SK-N-SH (cell line): ENCODE measurements at regions of chr19 and their contacts with region 1.

Region 1: GRCh38 chr19:44570984-44571684 is 41.7 kb upstream of the CEACAM20 start:
- DNase-seq: peak; percentile 61
- H3K4me3 ChIP-seq: peak overlapping the region in 1 of 2 experiments; percentile 34; a peak in 1 of 4 replicates
- H3K27ac ChIP-seq: no peak overlapping the region
- H3K4me1 ChIP-seq: no peaks in the 10 kb centered on the region
- H3K27me3 ChIP-seq: peaks cover 32% of the 10 kb centered on the region; the same call in 1 of the 2 replicates
- CTCF ChIP-seq: peak; percentile 88
- EP300 ChIP-seq: no peak
- RAD21 ChIP-seq: peak; percentile 81

Region 2: DNA sequence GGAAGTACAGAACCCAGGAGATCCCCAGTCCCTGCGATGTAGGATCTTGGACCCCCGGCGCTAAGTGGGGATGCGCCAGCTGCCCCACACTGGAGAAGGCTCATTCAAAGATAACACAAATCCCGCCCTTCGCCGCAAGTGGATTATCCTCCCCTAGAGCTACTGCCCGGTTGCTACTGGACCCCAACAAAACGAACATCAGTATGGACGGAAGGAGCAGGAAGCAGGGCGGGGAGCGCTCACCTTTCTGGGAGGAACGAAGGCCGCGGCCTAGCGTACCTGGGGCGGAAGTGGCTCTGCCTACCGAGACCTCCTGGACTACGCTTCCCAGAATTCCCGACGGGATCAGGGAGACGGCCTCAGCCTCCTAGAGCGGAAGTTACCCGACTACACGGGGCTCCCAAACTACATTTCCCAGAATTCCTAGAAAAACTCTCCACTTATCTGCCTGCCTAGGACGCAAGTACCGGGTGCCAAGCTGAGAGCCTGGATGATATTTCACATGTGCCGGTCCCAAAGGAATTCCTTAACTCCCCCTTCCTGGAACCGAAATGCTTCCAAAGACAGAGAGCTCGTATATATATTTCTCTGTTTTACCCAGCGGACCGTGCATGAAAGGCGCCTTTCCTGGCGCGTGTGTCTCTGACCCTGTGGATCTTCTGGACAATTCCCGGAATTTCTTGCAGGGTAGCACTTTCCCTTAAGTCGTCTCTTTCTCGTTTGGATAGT is 214.6 kb before region 1 on chr19 and contains the start of gene ZNF112:
- CTCF ChIA-PET with region 1: no interaction called
- POLR2A ChIA-PET with region 1: no interaction called
- DNase-seq: peak; percentile 67
- H3K4me3 ChIP-seq: peak within 1 kb of the TSS; percentile 82 to 90
- H3K27ac ChIP-seq: peak within 1 kb of the TSS; percentile 16 to 78; a peak in 1 of 4 replicates
- H3K4me1 ChIP-seq: no peaks in the 10 kb centered on the region; a peak in 1 of 4 replicates
- H3K27me3 ChIP-seq: no peaks in the 10 kb centered on the region
- CTCF ChIP-seq: no peak
- EP300 ChIP-seq: no peak
- RAD21 ChIP-seq: no peak
- polyA plus RNA-seq, gene ZNF112: 2.5 and 5.3 TPM in 2 replicates

Region 3: GRCh38 chr19:44553478-44554171 is 17.5 kb before region 1 on chr19:
- CTCF ChIA-PET with region 1: interaction called, 14 read pairs
- POLR2A ChIA-PET with region 1: no interaction called
- DNase-seq: no peak
- H3K4me3 ChIP-seq: peak overlapping the region in 1 of 2 experiments; percentile 12; a peak in 1 of 4 replicates
- H3K27ac ChIP-seq: no peak overlapping the region
- H3K4me1 ChIP-seq: no peaks in the 10 kb centered on the region
- H3K27me3 ChIP-seq: peaks cover 7% of the 10 kb centered on the region; the same call in 1 of the 2 replicates
- CTCF ChIP-seq: no peak
- EP300 ChIP-seq: no peak
- RAD21 ChIP-seq: no peak

Region 4: GRCh38 chr19:44603201-44603950 is 32.2 kb after region 1 on chr19:
- CTCF ChIA-PET with region 1: interaction called, 13 read pairs
- POLR2A ChIA-PET with region 1: no interaction called
- DNase-seq: no peak
- H3K4me3 ChIP-seq: 0 out of 4 replicates have a peak overlapping the region, but pooled peaks of 1 of the 2 experiments have one; percentile 13
- H3K27ac ChIP-seq: peak overlapping the region in 1 of 2 experiments; percentile 71; a peak in 2 of 4 replicates
- H3K4me1 ChIP-seq: peaks cover 0 to 25% of the 10 kb centered on the region in 2 experiments; a peak in 2 of 4 replicates
- H3K27me3 ChIP-seq: no peaks in the 10 kb centered on the region
- CTCF ChIP-seq: no peak
- EP300 ChIP-seq: no peak; a peak in 1 of 4 replicates
- RAD21 ChIP-seq: no peak

Region 5: GRCh38 chr19:44635581-44636438 is 64.7 kb after region 1 on chr19:
- CTCF ChIA-PET with region 1: interaction called, 13 read pairs
- POLR2A ChIA-PET with region 1: no interaction called
- DNase-seq: no peak
- H3K4me3 ChIP-seq: no peak overlapping the region
- H3K27ac ChIP-seq: 0 out of 4 replicates have a peak overlapping the region, but pooled peaks of 1 of the 2 experiments have one; percentile 21
- H3K4me1 ChIP-seq: peaks cover 0 to 8% of the 10 kb centered on the region in 2 experiments; a peak in 2 of 4 replicates
- H3K27me3 ChIP-seq: no peaks in the 10 kb centered on the region
- CTCF ChIP-seq: no peak
- EP300 ChIP-seq: no peak
- RAD21 ChIP-seq: no peak

Region 6: GRCh38 chr19:44675521-44675920 is 104.4 kb after region 1 on chr19:
- CTCF ChIA-PET with region 1: interaction called, 12 read pairs
- POLR2A ChIA-PET with region 1: no interaction called
- DNase-seq: no peak
- H3K4me3 ChIP-seq: no peak overlapping the region
- H3K27ac ChIP-seq: no peak overlapping the region
- H3K4me1 ChIP-seq: no peaks in the 10 kb centered on the region
- H3K27me3 ChIP-seq: no peaks in the 10 kb centered on the region
- CTCF ChIP-seq: no peak
- EP300 ChIP-seq: no peak
- RAD21 ChIP-seq: no peak

Region 7: GRCh38 chr19:44689056-44689895 is 118.1 kb after region 1 on chr19:
- CTCF ChIA-PET with region 1: interaction called, 26 read pairs
- POLR2A ChIA-PET with region 1: no interaction called
- DNase-seq: peak; percentile 78
- H3K4me3 ChIP-seq: no peak overlapping the region; a peak in 1 of 4 replicates
- H3K27ac ChIP-seq: no peak overlapping the region
- H3K4me1 ChIP-seq: peaks cover 0 to 16% of the 10 kb centered on the region in 2 experiments; a peak in 3 of 4 replicates
- H3K27me3 ChIP-seq: no peaks in the 10 kb centered on the region
- CTCF ChIP-seq: peak; percentile 92
- EP300 ChIP-seq: no peak
- RAD21 ChIP-seq: peak; percentile 78